ENCODE measurements at regions of chr2 and their contacts with region 1.

Region 1: GRCh38 chr2:102103992-102104871 is 38.3 kb upstream of the IL1R1 start:
- DNase-seq: peak in 25 of 35 experiments; percentile 2 to 42 (median 14)
- ATAC-seq: peak; percentile 44 to 77 (median 72)
- H3K4me3 ChIP-seq: peak overlapping the region in 1 of 2 donors; percentile 31
- H3K4me3 Mint-ChIP-seq: peak overlapping the region; percentile 77 to 81 (median 79)
- H3K27ac ChIP-seq: peak overlapping the region; percentile 22
- H3K27ac Mint-ChIP-seq: peak overlapping the region; percentile 61 to 79
- H3K4me1 ChIP-seq: peaks cover 0 to 9% of the 10 kb centered on the region in 2 experiments
- H3K4me1 Mint-ChIP-seq: peaks cover 12 to 17% (median 12%) of the 10 kb centered on the region in 3 donors
- H3K27me3 ChIP-seq: no peaks in the 10 kb centered on the region
- H3K27me3 Mint-ChIP-seq: peaks cover 5 to 12% of the 10 kb centered on the region in 2 donors

Region 2: DNA sequence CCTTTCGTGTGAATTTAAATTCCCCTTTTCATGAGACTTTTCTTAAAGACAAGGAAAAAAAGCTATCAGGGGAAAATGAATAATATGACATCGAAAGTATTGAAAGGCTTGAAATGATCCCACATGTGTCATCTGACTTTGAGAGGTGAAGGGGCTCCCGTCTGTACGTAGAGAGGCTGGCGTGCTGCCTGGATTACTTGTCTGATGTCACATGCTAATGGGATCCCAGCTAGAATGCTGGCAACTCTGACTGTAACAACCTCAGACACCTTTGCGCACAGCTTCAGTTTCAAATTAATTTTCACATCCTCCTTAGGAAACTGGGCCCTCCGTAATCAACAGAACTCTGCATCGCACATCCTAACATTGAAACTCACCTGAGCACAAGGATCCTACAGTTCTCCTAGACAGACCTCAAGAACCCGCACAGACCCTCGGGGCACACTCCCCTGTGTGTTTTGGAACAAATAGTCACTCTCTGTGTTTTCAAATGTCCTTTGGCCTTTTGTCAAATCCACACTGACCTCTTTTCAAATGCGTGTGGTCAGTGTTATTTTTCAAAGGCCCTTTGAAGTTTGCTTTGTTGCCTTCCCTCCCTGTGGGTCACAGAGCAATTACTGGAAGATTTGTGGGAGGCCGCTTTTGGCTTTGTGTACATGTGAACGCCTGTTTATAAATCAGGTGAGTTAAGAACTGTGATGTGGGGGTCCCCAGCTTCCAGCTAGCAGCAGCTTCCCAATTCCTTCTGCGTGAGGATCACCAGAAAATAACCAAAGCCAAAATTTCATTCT is 46.5 kb before region 1 on chr2:
- CTCF ChIA-PET with region 1: interaction called in 1 of 2 experiments, 10 read pairs
- POLR2A ChIA-PET with region 1: no interaction called
- DNase-seq: no peak
- ATAC-seq: no peak
- H3K4me3 ChIP-seq: no peak overlapping the region
- H3K4me3 Mint-ChIP-seq: no peak overlapping the region
- H3K27ac ChIP-seq: no peak overlapping the region
- H3K27ac Mint-ChIP-seq: no peak overlapping the region
- H3K4me1 ChIP-seq: peaks cover 0 to 3% of the 10 kb centered on the region in 2 experiments
- H3K4me1 Mint-ChIP-seq: peaks cover 4 to 11% (median 7%) of the 10 kb centered on the region in 3 donors
- H3K27me3 ChIP-seq: no peaks in the 10 kb centered on the region
- H3K27me3 Mint-ChIP-seq: no peaks in the 10 kb centered on the region